Activated CD4-positive, alpha-beta T cell treated with anti-CD3 and anti-CD28 coated beads for 36 hours (primary cell): ENCODE measurements at regions of chrX and their contacts with region 1.

Region 1: DNA sequence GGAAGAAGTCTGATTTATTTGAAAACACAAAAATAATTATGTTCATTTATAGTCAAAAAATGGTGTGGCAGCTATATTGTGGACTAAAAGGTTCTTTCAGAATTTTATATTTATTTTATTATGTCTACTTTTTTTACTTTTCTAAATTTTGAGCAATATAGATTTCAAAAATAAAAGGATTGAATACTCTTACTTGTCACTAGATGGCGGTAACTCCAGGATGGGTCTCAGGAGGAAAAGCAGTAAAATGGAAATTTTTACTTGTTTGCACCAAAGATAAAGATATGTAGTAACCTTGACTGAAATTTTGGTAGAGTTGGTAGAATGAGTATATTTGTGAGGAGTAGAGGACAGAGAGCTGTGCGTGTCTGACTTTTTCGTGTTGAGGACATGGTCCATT is 14.5 kb upstream of the DACH2 start:
- DNase-seq: no peak
- ATAC-seq: no peak
- H3K4me3 Mint-ChIP-seq: no peak overlapping the region
- H3K27ac Mint-ChIP-seq: no peak overlapping the region
- H3K4me1 Mint-ChIP-seq: peaks cover 2% of the 10 kb centered on the region
- H3K27me3 Mint-ChIP-seq: peaks cover 4% of the 10 kb centered on the region

Region 2: GRCh38 chrX:86171366-86171765 is 37.6 kb after region 1 on chrX:
- CTCF ChIA-PET with region 1: no interaction called
- POLR2A ChIA-PET with region 1: no interaction called
- intact Hi-C with region 1: loop called in 1 of 2 experiments (anchors 1 kb)
- DNase-seq: peak; percentile 5
- ATAC-seq: no peak
- H3K4me3 Mint-ChIP-seq: no peak overlapping the region
- H3K27ac Mint-ChIP-seq: no peak overlapping the region
- H3K4me1 Mint-ChIP-seq: no peaks in the 10 kb centered on the region
- H3K27me3 Mint-ChIP-seq: peaks cover 4% of the 10 kb centered on the region

Region 3: DNA sequence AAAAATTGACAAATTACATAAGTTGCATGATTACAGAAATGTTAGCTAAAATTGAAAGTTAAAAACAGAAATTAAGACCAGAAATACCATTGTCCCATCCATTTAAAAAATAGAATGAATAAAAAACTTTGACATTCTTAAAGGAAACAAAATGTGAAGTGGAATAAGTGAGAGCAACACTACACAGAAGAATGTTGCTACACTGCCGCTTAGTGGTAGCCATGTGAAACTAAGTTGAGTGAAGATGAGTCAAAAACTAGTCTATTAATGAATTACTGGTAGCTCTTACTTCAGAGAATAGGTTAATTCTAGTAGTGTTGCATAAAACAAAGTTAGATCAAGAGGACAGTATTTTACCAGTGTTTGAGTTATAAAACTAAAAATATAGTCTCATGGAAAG is 812.8 kb after region 1 on chrX:
- CTCF ChIA-PET with region 1: no interaction called
- POLR2A ChIA-PET with region 1: no interaction called
- intact Hi-C with region 1: loop called in 1 of 2 experiments (anchors 5 kb)
- DNase-seq: peak; percentile 5
- ATAC-seq: no peak
- H3K4me3 Mint-ChIP-seq: no peak overlapping the region
- H3K27ac Mint-ChIP-seq: no peak overlapping the region
- H3K4me1 Mint-ChIP-seq: no peaks in the 10 kb centered on the region
- H3K27me3 Mint-ChIP-seq: no peaks in the 10 kb centered on the region

Region 4: GRCh38 chrX:87299563-87300160 is 1165.9 kb after region 1 on chrX:
- CTCF ChIA-PET with region 1: no interaction called
- POLR2A ChIA-PET with region 1: no interaction called
- intact Hi-C with region 1: loop called in 1 of 2 experiments (anchors 2 kb)
- DNase-seq: no peak
- ATAC-seq: no peak
- H3K4me3 Mint-ChIP-seq: no peak overlapping the region
- H3K27ac Mint-ChIP-seq: no peak overlapping the region
- H3K4me1 Mint-ChIP-seq: no peaks in the 10 kb centered on the region
- H3K27me3 Mint-ChIP-seq: no peaks in the 10 kb centered on the region